ENCODE measurements at regions of chr14 and their contacts with region 1.

Region 1: DNA sequence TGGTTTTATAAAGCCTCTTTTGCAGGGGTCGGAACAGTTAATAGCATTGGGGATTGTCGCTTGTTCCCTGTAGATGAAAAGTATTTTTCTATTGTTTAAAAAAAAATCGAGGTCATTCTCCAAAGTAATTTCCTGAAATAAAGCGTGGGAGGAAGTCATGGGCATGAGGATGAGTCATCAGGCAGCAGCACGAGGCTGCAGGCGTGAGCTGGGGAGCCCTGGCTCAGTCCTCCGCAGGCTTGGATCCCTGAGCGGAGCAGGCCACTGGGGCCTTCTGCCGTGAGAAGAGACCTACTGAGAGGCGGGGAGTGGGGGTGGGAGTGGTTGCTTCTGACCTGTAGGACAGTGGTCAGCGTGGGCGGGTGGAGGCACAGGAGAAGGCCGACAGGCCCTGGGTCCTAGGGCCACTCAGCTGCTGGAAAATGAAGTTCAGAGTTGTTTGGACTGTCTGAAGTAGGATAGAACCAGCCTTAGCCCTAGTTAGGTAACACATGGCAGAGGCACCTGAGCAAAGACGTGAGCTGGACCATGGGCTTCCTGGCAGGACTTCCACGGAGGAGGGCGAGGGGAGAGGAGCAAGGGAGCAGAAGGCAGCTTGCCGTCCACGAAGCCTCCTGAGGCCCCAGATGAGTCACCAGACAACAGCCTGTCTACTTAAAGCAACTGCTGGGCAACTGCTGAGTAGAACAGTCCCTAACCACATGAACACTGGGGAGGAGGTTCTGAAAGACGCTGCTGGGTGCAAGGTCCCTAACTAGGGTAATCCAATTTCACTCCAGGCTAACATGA is 21.1 kb upstream of the LGALS3 start:
- DNase-seq: peak; percentile 71 to 82
- ATAC-seq: peak; percentile 75 to 76
- H3K4me3 ChIP-seq: no peak overlapping the region
- H3K27ac ChIP-seq: peak overlapping the region; percentile 79 to 87
- H3K4me1 ChIP-seq: peaks cover 24% of the 10 kb centered on the region
- CTCF ChIP-seq: no peak
- EP300 ChIP-seq: no peak
- POLR2A ChIP-seq: no peak
- RAD21 ChIP-seq: no peak

Region 2: DNA sequence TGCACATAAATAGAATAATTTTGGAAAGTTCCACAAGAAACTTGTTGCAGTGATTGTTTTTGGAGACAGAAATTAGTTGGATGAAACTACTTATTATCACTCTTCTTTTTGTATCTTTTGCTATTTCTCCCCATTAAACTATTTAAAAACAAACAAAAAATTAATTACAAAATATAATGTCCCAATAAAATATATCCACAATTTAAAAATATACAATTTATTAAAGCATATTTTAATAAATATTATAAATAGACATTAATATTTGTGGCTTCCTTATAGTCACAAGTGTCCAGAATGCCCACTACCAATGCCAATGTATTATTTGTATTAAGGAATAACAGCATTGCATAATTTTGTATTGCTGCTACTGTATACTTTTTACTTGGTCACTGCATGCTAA is 152.8 kb before region 1 on chr14:
- CTCF ChIA-PET with region 1: no interaction called
- POLR2A ChIA-PET with region 1: no interaction called
- DNase-seq: no peak
- ATAC-seq: no peak
- H3K4me3 ChIP-seq: no peak overlapping the region
- H3K27ac ChIP-seq: no peak overlapping the region
- H3K4me1 ChIP-seq: no peaks in the 10 kb centered on the region
- CTCF ChIP-seq: no peak
- EP300 ChIP-seq: no peak
- POLR2A ChIP-seq: no peak
- RAD21 ChIP-seq: no peak

Region 3: DNA sequence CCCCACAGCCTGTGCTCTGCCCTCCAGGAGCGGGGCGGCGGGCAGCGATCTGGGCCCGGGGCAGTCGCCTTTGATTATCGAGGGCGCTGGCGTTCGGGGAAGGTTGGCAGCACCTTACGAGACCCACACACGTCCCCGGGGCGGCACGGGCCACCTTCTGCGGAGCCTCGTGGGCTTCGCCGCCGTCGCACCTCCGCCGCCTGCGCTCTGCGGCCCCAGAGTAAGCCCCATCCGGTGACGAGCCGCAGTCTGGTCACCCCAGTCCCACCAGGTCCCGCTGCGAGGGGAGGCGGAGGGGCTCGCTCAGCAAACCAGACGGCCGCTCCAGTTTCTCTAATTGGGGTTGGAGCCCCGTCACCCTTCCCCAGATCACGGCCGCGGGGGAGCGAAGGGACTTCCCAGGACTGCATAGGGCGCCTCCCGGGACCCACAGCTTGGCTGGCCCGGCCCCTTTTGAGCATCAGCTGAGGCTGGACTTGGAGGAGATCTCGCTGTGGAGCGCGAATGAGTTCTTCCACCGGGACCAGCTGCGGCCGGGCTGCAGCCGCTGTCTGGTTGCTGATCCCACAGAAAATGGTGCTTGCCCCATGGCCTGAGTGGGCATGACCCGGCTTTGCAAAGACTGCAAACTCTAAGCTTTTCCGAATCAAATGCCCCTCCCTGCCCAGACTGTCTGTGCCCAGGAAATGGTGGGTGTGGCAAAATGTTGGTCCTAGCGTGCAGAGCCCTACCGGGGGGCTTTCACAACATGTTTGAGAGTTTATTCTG is 21.7 kb after region 1 on chr14:
- CTCF ChIA-PET with region 1: interaction called, 16 read pairs
- POLR2A ChIA-PET with region 1: interaction called, 63 read pairs
- DNase-seq: peak; percentile 72 to 82
- ATAC-seq: peak; percentile 87 to 88
- H3K4me3 ChIP-seq: peak overlapping the region; percentile 69
- H3K27ac ChIP-seq: peak overlapping the region; percentile 76 to 93
- H3K4me1 ChIP-seq: peaks cover 19% of the 10 kb centered on the region
- CTCF ChIP-seq: no peak
- EP300 ChIP-seq: no peak
- POLR2A ChIP-seq: no peak
- RAD21 ChIP-seq: no peak

Measured in A549 (cell line).